ENCODE measurements at regions of chr9 and their contacts with region 1.

Region 1: GRCh38 chr9:38160613-38161215 is 91.7 kb upstream of the SHB start:
- DNase-seq: no peak
- ATAC-seq: peak; percentile 89
- H3K4me3 ChIP-seq: no peak overlapping the region
- H3K27ac ChIP-seq: no peak overlapping the region
- H3K4me1 ChIP-seq: no peaks in the 10 kb centered on the region; the same call in 1 of the 2 replicates
- H3K27me3 ChIP-seq: no peaks in the 10 kb centered on the region
- CTCF ChIP-seq: peak; percentile 62 to 90 (median 86)
- EP300 ChIP-seq: no peak
- POLR2A ChIP-seq: no peak
- RAD21 ChIP-seq: peak; percentile 75

Region 2: DNA sequence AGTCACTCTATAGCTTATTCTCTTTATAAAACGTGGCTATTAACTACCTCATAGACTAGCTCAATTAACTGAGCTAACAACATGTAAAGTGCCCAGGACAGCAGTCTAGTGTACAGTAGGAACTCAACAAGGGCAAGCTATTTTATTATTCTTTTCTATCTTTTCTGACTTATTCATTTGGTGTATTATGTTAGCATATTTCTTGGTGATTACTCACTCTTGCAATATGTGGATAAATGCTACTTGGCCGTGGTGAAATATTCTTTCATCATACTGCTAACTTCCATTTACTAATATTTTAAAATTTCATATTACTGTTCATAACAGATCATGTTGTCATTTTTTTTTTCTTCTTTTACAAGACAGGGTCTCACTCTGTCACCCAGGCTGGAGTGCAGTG is 261.7 kb before region 1 on chr9:
- CTCF ChIA-PET with region 1: no interaction called
- POLR2A ChIA-PET with region 1: no interaction called
- RAD21 ChIA-PET with region 1: no interaction called
- SMC1A ChIA-PET with region 1: no interaction called
- in situ Hi-C with region 1: no loop called
- intact Hi-C with region 1: no loop called
- DNase-seq: no peak
- ATAC-seq: no peak
- H3K4me3 ChIP-seq: no peak overlapping the region
- H3K27ac ChIP-seq: no peak overlapping the region
- H3K4me1 ChIP-seq: peaks cover 10% of the 10 kb centered on the region
- H3K27me3 ChIP-seq: no peaks in the 10 kb centered on the region
- CTCF ChIP-seq: no peak
- EP300 ChIP-seq: no peak
- POLR2A ChIP-seq: no peak
- RAD21 ChIP-seq: no peak

Region 3: DNA sequence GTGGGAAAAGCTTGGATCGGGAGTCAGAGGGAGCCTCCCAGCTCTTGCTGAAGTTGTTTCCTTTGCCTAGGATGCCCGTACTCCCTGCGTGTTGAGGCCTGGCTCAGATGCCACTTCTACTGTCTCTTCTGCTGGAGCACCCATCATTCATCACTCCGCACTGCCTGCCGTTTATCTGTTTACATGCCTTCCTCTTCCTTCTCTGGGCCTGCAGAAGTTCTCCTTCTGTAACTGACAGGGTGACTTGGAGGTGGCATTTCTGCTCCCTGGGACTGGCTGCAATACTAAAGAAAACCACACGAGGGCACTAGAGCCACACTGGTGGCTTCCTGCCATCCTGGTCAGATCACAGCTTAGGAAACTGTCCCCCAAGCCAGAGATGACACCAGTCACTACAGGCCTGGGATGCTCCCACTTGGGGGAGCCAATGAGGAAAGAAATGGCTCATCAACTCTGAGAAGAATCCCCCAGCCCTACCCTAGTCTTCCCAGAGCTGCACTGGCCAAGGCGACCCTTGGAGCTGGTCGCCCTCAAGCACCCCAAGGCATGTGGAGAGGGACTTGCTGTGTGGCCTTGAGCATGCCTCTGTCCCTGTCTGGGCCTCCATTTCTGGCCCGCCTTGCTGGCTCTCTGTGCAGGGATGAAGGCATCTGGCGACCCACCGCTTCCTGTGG is 247.1 kb before region 1 on chr9:
- CTCF ChIA-PET with region 1: interaction called, 13 read pairs
- POLR2A ChIA-PET with region 1: no interaction called
- RAD21 ChIA-PET with region 1: interaction called, 6 read pairs
- SMC1A ChIA-PET with region 1: interaction called, 14 read pairs
- in situ Hi-C with region 1: loop called (anchors 5 kb)
- intact Hi-C with region 1: loop called (anchors 1 kb)
- DNase-seq: peak; percentile 47
- ATAC-seq: peak; percentile 93
- H3K4me3 ChIP-seq: no peak overlapping the region
- H3K27ac ChIP-seq: no peak overlapping the region
- H3K4me1 ChIP-seq: no peaks in the 10 kb centered on the region; the same call in 1 of the 2 replicates
- H3K27me3 ChIP-seq: no peaks in the 10 kb centered on the region
- CTCF ChIP-seq: peak; percentile 96 to 98 (median 97)
- EP300 ChIP-seq: no peak
- POLR2A ChIP-seq: no peak
- RAD21 ChIP-seq: peak; percentile 97

Region 4: GRCh38 chr9:38107811-38108304 is 52.9 kb before region 1 on chr9:
- CTCF ChIA-PET with region 1: interaction called, 15 read pairs
- POLR2A ChIA-PET with region 1: no interaction called
- RAD21 ChIA-PET with region 1: interaction called, 19 read pairs
- SMC1A ChIA-PET with region 1: interaction called, 27 read pairs
- in situ Hi-C with region 1: no loop called
- intact Hi-C with region 1: no loop called
- DNase-seq: no peak
- ATAC-seq: peak; percentile 76
- H3K4me3 ChIP-seq: no peak overlapping the region
- H3K27ac ChIP-seq: peak overlapping the region; percentile 30
- H3K4me1 ChIP-seq: peaks cover 10% of the 10 kb centered on the region
- H3K27me3 ChIP-seq: no peaks in the 10 kb centered on the region
- CTCF ChIP-seq: no peak
- EP300 ChIP-seq: no peak
- POLR2A ChIP-seq: no peak
- RAD21 ChIP-seq: no peak

Region 5: GRCh38 chr9:38127271-38127882 is 33.3 kb before region 1 on chr9:
- CTCF ChIA-PET with region 1: interaction called, 28 read pairs
- POLR2A ChIA-PET with region 1: interaction called, 8 read pairs
- RAD21 ChIA-PET with region 1: interaction called, 9 read pairs
- SMC1A ChIA-PET with region 1: interaction called, 51 read pairs
- in situ Hi-C with region 1: no loop called
- intact Hi-C with region 1: no loop called
- DNase-seq: no peak
- ATAC-seq: peak; percentile 10; the same call in 1 of the 3 replicates
- H3K4me3 ChIP-seq: no peak overlapping the region
- H3K27ac ChIP-seq: no peak overlapping the region
- H3K4me1 ChIP-seq: no peaks in the 10 kb centered on the region
- H3K27me3 ChIP-seq: peaks cover 0 to 1% of the 10 kb centered on the region in 2 experiments; a peak in 2 of 4 replicates
- CTCF ChIP-seq: no peak
- EP300 ChIP-seq: no peak
- POLR2A ChIP-seq: no peak
- RAD21 ChIP-seq: no peak

Region 6: GRCh38 chr9:38141746-38142591 is 18.7 kb before region 1 on chr9:
- CTCF ChIA-PET with region 1: interaction called, 43 read pairs
- POLR2A ChIA-PET with region 1: interaction called, 4 read pairs
- RAD21 ChIA-PET with region 1: interaction called, 10 read pairs
- SMC1A ChIA-PET with region 1: interaction called, 37 read pairs
- in situ Hi-C with region 1: no loop called
- intact Hi-C with region 1: no loop called
- DNase-seq: no peak
- ATAC-seq: peak; percentile 76
- H3K4me3 ChIP-seq: no peak overlapping the region
- H3K27ac ChIP-seq: no peak overlapping the region
- H3K4me1 ChIP-seq: no peaks in the 10 kb centered on the region
- H3K27me3 ChIP-seq: peaks cover 0 to 1% of the 10 kb centered on the region in 2 experiments; a peak in 1 of 4 replicates
- CTCF ChIP-seq: no peak
- EP300 ChIP-seq: 0 out of 4 replicates have a peak, but pooled peaks of 1 of the 2 experiments have one; percentile 39
- POLR2A ChIP-seq: no peak
- RAD21 ChIP-seq: no peak

Region 7: DNA sequence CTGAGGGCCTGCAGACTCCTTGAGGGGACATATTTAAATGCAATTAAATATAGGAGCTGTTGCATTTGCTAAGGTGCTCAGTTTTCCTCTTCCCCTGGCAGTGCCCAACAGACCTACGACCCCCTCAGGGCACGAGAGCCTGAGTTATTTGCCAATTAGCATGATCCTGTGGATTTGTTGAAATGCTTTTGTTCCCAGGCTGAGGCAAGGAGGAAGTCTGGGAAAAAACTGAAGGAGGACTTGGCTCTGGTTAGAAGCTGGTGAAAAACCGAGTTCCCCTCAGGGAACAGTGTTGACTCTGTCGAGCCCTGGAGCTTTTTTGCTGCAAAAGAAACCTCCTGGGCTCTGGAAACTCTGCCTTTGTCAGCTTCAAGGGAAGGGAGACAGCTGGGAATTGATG is 11.9 kb after region 1 on chr9:
- CTCF ChIA-PET with region 1: interaction called, 30 read pairs
- POLR2A ChIA-PET with region 1: interaction called, 4 read pairs
- RAD21 ChIA-PET with region 1: interaction called, 4 read pairs
- SMC1A ChIA-PET with region 1: interaction called, 7 read pairs
- in situ Hi-C with region 1: no loop called
- intact Hi-C with region 1: no loop called
- DNase-seq: no peak
- ATAC-seq: no peak
- H3K4me3 ChIP-seq: no peak overlapping the region
- H3K27ac ChIP-seq: no peak overlapping the region
- H3K4me1 ChIP-seq: peaks cover 1% of the 10 kb centered on the region; the same call in 1 of the 2 replicates
- H3K27me3 ChIP-seq: no peaks in the 10 kb centered on the region
- CTCF ChIP-seq: no peak
- EP300 ChIP-seq: no peak
- POLR2A ChIP-seq: no peak
- RAD21 ChIP-seq: no peak

Region 8: GRCh38 chr9:38227061-38227540 is 66.4 kb after region 1 on chr9:
- CTCF ChIA-PET with region 1: interaction called, 12 read pairs
- POLR2A ChIA-PET with region 1: interaction called, 4 read pairs
- RAD21 ChIA-PET with region 1: interaction called, 22 read pairs
- SMC1A ChIA-PET with region 1: interaction called, 69 read pairs
- in situ Hi-C with region 1: no loop called
- intact Hi-C with region 1: no loop called
- DNase-seq: peak; percentile 23
- ATAC-seq: peak; percentile 83
- H3K4me3 ChIP-seq: peak overlapping the region; percentile 32; the same call in 1 of the 2 replicates
- H3K27ac ChIP-seq: no peak overlapping the region
- H3K4me1 ChIP-seq: peaks cover 7% of the 10 kb centered on the region
- H3K27me3 ChIP-seq: peaks cover 0 to 5% of the 10 kb centered on the region in 2 experiments
- CTCF ChIP-seq: no peak
- EP300 ChIP-seq: no peak
- POLR2A ChIP-seq: no peak
- RAD21 ChIP-seq: no peak